ENCODE measurements at regions of chr9 and their contacts with region 1.

Region 1: DNA sequence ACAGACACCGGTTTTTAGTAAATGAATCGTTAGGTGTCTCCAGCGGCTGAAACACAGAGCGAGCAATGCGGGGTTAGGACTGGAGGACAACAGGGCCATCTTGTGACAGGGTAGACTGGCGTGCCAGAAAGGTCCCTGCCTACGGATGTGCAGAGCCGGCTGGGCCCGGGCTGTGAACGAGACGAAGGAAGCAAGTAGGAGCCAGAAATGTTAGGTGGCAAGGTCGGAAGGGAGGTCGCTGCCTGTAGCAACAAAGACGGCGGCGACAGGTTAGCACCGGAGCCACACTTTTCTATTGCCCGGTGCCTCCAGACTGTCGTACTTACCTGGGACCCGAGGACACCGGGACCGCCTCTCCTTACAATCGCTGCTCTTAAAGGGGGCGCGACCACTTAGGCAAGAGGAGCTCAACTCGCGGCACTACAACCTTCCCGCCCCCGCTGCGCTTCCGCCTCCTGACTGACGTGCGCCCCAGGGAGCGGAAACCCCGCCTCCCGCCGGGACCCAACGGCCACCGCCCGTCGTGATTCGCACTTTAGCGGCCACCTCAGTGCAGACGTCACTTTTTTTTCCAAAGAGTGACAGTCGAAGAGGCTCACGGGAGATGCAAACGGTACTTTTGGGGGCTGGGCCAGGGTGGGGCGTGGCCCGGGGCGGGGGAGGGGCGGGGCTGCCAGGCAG is at the start of gene INIP:
- DNase-seq: peak; percentile 98
- H3K4me3 Mint-ChIP-seq: peak within 1 kb of the TSS; percentile 99
- H3K27ac Mint-ChIP-seq: peak within 1 kb of the TSS; percentile 100
- H3K4me1 Mint-ChIP-seq: peaks cover 35% of the 10 kb centered on the region
- H3K27me3 Mint-ChIP-seq: no peaks in the 10 kb centered on the region
- total RNA-seq, gene INIP: 38.3 and 46.4 TPM in 2 replicates

Region 2: DNA sequence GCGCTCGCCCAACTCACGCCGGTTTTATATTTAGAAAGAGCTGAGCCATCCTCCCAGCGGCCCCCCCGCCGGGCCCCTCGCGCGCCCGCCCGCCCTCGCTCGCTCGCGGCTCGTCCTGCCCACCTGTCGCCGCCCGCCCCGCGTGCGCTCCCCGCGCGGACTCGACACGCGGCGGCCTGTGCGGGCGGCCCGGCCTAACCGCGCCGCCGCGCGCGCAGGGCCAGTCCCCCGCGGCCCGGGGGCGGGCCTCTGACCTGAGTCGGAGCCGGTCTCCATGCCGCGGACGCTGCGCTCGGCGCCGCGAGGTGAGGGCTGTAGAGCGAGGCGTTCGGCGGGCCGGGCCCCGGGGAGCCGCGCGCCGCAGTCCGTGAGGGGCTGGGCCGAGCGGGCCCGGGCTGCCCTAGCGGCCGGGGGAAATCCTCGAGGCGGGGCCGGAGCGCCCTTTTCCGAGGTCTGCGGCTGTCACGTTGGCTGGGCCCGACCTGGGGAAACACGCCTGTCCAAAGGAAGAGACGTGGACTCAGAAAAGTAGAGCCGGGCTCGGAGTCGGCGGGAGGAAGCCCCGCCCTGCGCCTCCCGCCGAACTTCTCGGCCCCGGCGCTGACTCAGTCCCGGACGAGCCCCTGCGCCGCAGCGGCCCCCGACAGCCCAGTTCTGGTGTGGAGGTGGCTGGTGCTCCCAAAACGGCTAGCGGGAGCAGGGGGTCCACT is 1233.8 kb before region 1 on chr9 and contains the start of gene ECPAS:
- intact Hi-C with region 1: loop called (anchors 2 kb)
- DNase-seq: peak; percentile 65
- H3K4me3 Mint-ChIP-seq: peak within 1 kb of the TSS; percentile 87
- H3K27ac Mint-ChIP-seq: peak within 1 kb of the TSS; percentile 86
- H3K4me1 Mint-ChIP-seq: peaks cover 34% of the 10 kb centered on the region
- H3K27me3 Mint-ChIP-seq: peaks cover 3% of the 10 kb centered on the region
- total RNA-seq, gene ECPAS: 98.9 and 110 TPM in 2 replicates

Region 3: GRCh38 chr9:112097712-112098688 is 619.8 kb before region 1 on chr9:
- intact Hi-C with region 1: loop called (anchors 5 kb)
- DNase-seq: peak; percentile 54
- H3K4me3 Mint-ChIP-seq: no peak overlapping the region
- H3K27ac Mint-ChIP-seq: no peak overlapping the region
- H3K4me1 Mint-ChIP-seq: peaks cover 32% of the 10 kb centered on the region
- H3K27me3 Mint-ChIP-seq: peaks cover 2% of the 10 kb centered on the region

Region 4: GRCh38 chr9:112443200-112443599 is 274.6 kb before region 1 on chr9:
- intact Hi-C with region 1: loop called (anchors 5 kb)
- DNase-seq: peak; percentile 7
- H3K4me3 Mint-ChIP-seq: no peak overlapping the region
- H3K27ac Mint-ChIP-seq: no peak overlapping the region
- H3K4me1 Mint-ChIP-seq: peaks cover 11% of the 10 kb centered on the region
- H3K27me3 Mint-ChIP-seq: no peaks in the 10 kb centered on the region

Region 5: DNA sequence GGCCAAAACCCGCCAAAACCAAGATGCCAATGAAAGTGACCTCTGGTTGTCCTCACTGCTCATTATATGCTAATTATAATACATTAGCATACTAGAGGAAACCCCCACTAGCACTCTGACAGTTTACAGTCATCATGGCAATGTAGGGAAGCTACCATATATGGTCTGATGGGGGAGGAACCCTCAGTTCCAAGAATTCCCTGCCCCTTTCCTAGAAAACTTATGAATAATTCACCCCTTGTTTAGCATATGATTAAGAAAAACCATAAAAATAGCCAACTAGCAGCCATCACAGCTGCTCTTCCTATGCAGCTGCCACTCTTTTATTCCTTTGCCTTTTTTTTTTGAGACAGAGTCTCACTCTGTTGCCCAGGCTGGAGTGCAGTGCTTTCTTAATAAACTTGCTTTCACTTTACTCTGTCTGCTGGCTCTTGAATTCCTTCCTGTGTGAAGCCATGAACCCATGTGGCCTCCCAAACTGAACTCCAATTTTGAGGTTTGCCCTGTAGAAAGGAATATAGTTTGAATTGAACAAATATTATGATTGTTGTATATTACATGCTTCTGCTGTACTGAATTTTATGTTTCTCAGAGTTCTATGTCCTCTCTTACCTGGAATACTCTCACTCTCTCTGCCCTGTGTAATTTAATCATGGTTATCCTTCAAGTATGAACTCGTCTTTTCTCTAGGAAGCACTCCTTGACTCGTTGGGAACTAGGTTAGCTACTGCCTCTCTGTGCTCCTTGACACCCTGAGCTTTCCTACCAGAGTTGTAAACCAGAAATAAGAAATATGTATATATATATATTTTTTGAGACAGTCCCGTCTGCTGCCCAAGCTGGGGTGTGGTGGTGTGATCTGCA is 171.4 kb before region 1 on chr9:
- intact Hi-C with region 1: loop called (anchors 5 kb)
- DNase-seq: no peak
- H3K4me3 Mint-ChIP-seq: peak overlapping the region; percentile 31
- H3K27ac Mint-ChIP-seq: peak overlapping the region; percentile 50
- H3K4me1 Mint-ChIP-seq: peaks cover 13% of the 10 kb centered on the region
- H3K27me3 Mint-ChIP-seq: peaks cover 2% of the 10 kb centered on the region

Region 6: DNA sequence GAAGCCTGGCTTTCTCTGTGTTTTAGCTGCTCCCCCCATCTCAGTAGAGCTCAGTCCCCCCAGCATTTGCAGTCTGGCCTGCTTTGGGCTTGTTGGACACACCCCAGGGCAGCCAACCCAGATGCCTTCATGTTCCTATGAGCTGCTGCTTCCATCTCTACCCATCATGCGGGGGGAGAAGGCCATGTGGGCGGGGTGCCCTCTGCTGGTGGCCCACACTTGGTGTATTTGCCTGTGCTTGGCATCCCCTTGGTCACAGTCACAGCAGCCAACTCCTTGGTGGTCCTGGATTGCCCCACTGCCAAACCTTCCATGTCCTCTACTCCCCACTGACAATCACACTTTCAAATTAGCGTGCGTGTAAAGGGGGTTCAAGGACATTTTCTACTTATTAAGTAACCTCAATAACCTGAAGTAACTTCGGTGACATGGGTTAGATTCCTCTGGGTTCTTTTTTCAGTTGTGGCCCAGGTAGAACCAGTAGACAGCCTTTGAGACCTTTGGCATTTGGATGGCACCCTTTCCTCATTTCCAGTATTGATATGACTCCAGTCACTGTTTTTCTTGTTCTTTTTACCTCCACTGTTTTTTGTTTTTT is 75.5 kb after region 1 on chr9:
- intact Hi-C with region 1: loop called (anchors 1 kb)
- DNase-seq: peak; percentile 67
- H3K4me3 Mint-ChIP-seq: no peak overlapping the region
- H3K27ac Mint-ChIP-seq: no peak overlapping the region
- H3K4me1 Mint-ChIP-seq: peaks cover 7% of the 10 kb centered on the region
- H3K27me3 Mint-ChIP-seq: peaks cover 4% of the 10 kb centered on the region

Region 7: DNA sequence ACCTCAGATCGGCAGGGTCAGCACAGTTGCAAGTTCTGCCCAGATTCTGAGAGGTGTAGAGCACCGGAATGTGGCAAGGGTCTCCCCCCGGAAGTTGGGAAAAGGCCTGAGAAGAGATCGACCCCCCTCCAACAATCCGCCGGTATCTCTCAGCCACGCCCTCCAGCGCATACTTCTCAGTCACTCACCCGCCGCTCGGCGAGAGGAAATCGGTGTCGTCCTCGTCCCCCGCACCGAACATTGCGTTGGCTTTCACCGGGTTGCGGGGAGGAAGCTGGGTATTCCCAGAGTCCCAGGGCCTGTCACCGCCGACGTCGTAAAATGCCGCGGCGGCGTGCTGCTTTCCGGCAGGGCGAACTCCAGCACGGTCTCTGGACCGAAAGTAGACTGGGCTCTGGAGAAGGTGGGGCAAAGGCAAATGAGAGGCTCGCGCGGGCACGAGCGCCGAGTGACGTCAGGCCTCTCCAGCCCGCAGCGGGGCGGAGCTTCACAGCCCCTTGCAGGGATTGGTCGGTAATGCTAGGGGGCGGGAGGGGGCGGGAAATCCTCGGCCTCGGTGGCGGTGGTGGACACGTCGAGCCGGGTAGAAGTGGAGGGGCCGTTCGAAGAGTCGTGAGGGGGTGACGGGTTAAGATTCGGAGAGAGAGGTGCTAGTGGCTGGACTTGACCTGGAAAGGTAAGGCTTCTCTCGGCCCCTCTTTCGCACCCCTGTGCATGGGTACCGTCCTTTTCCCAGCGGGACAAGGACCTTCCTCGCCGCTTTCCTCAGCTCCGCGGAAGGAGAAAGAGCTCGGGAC is 503.4 kb after region 1 on chr9 and contains the starts of genes FKBP15 and SLC31A1:
- intact Hi-C with region 1: loop called (anchors 10 kb)
- DNase-seq: peak; percentile 96
- H3K4me3 Mint-ChIP-seq: peak within 1 kb of the TSS; percentile 98
- H3K27ac Mint-ChIP-seq: peak within 1 kb of the TSS; percentile 97
- H3K4me1 Mint-ChIP-seq: peaks cover 64% of the 10 kb centered on the region
- H3K27me3 Mint-ChIP-seq: no peaks in the 10 kb centered on the region
- total RNA-seq, gene FKBP15: 34.9 and 35.8 TPM in 2 replicates
- total RNA-seq, gene SLC31A1: 16.1 and 17.6 TPM in 2 replicates